HCT116 (cell line): ENCODE measurements at regions of chrX and their contacts with region 1.

Region 1: DNA sequence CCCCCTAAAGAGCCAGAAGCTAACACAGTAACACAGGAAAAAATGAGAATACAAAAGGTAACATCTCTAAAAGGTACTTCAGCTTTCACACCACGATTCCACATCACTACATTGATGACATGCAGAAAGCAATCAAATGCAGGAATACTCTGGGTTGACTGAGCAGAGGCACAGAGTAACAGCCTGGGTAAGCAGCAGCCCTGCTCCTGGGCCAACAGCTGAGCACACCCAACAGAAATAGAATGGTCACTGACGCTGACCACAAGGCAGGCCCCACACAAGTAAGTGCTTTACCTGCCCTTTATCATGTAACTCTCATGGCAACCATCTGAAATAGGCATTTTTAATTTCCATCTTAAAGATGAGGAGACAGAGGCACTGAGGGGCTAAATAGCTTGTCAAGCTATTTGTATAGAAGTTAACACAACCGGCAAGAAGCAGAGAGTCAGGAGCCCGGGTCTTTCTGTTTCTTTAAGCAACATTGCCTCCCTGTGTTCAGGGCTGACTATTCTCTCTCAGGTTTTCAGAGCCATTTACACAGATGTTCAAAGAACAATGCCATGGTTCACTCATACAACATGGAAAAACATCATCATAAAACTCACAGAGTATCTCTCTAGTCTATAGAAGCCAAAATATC is 168.9 kb downstream of the ZNF674 start:
- DNase-seq: peak; percentile 56
- ATAC-seq: peak; percentile 90
- H3K4me3 ChIP-seq: no peak overlapping the region
- H3K27ac ChIP-seq: peak overlapping the region; percentile 89
- H3K4me1 ChIP-seq: peaks cover 19 to 39% of the 10 kb centered on the region in 2 experiments
- H3K27me3 ChIP-seq: no peaks in the 10 kb centered on the region
- CTCF ChIP-seq: peak; percentile 24 to 52 (median 37); a peak in 4 of 6 replicates
- POLR2A ChIP-seq: no peak
- RAD21 ChIP-seq: peak; percentile 83

Region 2: GRCh38 chrX:45801554-45801953 is 574.8 kb before region 1 on chrX:
- CTCF ChIA-PET with region 1: interaction called, 5 read pairs
- POLR2A ChIA-PET with region 1: no interaction called
- RAD21 ChIA-PET with region 1: interaction called in 1 of 2 experiments, 8 read pairs
- intact Hi-C with region 1: loop called (anchors 10 kb)
- DNase-seq: no peak
- ATAC-seq: peak; percentile 38; the same call in 1 of the 2 replicates
- H3K4me3 ChIP-seq: peak overlapping the region in 1 of 2 experiments; percentile 8; a peak in 1 of 4 replicates
- H3K27ac ChIP-seq: peak overlapping the region; percentile 74
- H3K4me1 ChIP-seq: peaks cover 71 to 99% of the 10 kb centered on the region in 2 experiments
- H3K27me3 ChIP-seq: no peaks in the 10 kb centered on the region
- CTCF ChIP-seq: peak in 1 of 3 experiments; percentile 29; a peak in 2 of 6 replicates
- POLR2A ChIP-seq: no peak
- RAD21 ChIP-seq: no peak

Region 3: DNA sequence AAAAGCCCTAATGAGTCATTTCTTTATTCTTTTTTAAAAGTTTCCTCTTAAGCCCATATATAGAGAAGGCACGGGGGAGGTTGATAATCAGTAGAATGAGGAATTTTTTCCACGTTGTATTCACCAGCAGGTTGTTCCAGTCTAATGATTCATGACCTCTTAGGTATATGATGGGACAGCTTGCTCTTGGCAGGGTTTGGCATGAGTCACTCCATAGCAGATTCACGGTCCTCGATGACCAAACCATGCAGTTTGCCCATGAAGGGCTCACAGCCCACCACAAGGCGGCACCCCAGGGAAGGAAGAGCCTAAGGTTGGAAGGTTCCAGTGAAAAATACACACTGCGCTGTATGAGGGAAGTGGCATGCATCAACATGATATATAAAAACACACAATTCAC is 551.9 kb before region 1 on chrX:
- CTCF ChIA-PET with region 1: interaction called, 10 read pairs
- POLR2A ChIA-PET with region 1: no interaction called
- RAD21 ChIA-PET with region 1: no interaction called
- intact Hi-C with region 1: no loop called
- DNase-seq: peak; percentile 89
- ATAC-seq: peak; percentile 84
- H3K4me3 ChIP-seq: no peak overlapping the region
- H3K27ac ChIP-seq: peak overlapping the region; percentile 57; the same call in 1 of the 2 replicates
- H3K4me1 ChIP-seq: peaks cover 40 to 94% of the 10 kb centered on the region in 2 experiments
- H3K27me3 ChIP-seq: no peaks in the 10 kb centered on the region
- CTCF ChIP-seq: peak; percentile 31 to 72 (median 71); a peak in 5 of 6 replicates
- POLR2A ChIP-seq: no peak
- RAD21 ChIP-seq: peak; percentile 75

Region 4: DNA sequence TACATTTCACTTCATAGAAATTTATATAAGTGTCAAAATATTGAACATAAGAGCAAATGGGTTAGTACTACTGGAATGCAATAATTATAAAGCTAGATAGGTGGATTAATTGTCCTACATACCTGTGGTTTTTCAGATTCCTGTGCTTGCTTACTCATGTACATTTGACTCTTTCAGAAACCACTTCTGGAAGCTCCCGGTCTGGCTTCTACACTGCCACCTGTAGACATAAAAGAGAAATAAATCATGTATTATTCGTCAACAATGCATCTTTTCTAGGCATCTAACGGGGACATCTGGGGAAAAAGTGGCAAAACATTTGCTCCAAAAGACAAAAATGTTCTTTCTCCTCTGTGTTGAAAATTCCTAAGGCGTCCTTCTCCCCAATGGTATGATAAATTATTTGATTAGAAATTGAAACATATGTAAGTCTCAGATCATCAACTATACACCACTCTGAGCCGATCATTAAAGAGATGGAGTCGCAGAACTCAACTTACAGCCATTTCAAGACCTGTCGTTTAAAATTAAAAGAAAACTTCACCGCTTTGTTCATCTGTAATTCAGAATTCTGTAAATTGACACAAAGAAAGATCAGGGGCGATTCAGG is 527.0 kb before region 1 on chrX:
- CTCF ChIA-PET with region 1: interaction called, 3 read pairs
- POLR2A ChIA-PET with region 1: no interaction called
- RAD21 ChIA-PET with region 1: no interaction called
- intact Hi-C with region 1: loop called (anchors 5 kb)
- DNase-seq: peak; percentile 57
- ATAC-seq: no peak
- H3K4me3 ChIP-seq: peak overlapping the region; percentile 76 to 81
- H3K27ac ChIP-seq: peak overlapping the region; percentile 87; the same call in 1 of the 2 replicates
- H3K4me1 ChIP-seq: peaks cover 18 to 64% of the 10 kb centered on the region in 2 experiments
- H3K27me3 ChIP-seq: no peaks in the 10 kb centered on the region
- CTCF ChIP-seq: peak in 1 of 3 experiments; percentile 21; a peak in 1 of 6 replicates
- POLR2A ChIP-seq: no peak
- RAD21 ChIP-seq: no peak

Region 5: GRCh38 chrX:46180258-46180687 is 196.1 kb before region 1 on chrX:
- CTCF ChIA-PET with region 1: no interaction called
- POLR2A ChIA-PET with region 1: no interaction called
- RAD21 ChIA-PET with region 1: no interaction called
- intact Hi-C with region 1: loop called (anchors 10 kb)
- DNase-seq: peak; percentile 85
- ATAC-seq: peak; percentile 89
- H3K4me3 ChIP-seq: peak overlapping the region in 1 of 2 experiments; percentile 20; a peak in 2 of 4 replicates
- H3K27ac ChIP-seq: peak overlapping the region; percentile 86
- H3K4me1 ChIP-seq: peaks cover 36 to 56% of the 10 kb centered on the region in 2 experiments
- H3K27me3 ChIP-seq: no peaks in the 10 kb centered on the region
- CTCF ChIP-seq: 0 out of 6 replicates have a peak, but pooled peaks of 1 of the 3 experiments have one; percentile 5
- POLR2A ChIP-seq: no peak
- RAD21 ChIP-seq: no peak; the same call in 1 of the 2 replicates

Region 6: DNA sequence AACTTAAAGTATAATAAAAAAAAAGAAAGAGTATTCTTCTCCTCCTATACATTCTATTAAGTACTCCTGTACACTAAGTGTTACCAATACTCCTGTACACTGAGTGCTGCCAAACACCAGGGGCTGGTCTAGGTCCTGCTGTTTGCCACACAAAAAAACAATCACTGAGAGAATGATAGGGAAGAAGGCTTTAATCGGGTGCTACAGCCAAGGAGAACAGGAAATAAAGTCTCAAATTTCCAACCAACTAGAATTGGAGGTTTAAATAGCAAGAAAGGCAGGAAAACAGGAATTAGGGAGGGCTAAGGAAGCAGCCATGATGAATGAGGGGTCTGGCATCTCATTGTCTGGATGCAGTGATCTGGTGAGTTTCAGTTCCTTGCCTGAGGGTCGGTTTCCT is 70.9 kb before region 1 on chrX:
- CTCF ChIA-PET with region 1: no interaction called
- POLR2A ChIA-PET with region 1: no interaction called
- RAD21 ChIA-PET with region 1: no interaction called
- intact Hi-C with region 1: no loop called
- DNase-seq: no peak
- ATAC-seq: no peak
- H3K4me3 ChIP-seq: no peak overlapping the region
- H3K27ac ChIP-seq: no peak overlapping the region
- H3K4me1 ChIP-seq: no peaks in the 10 kb centered on the region
- H3K27me3 ChIP-seq: no peaks in the 10 kb centered on the region
- CTCF ChIP-seq: no peak
- POLR2A ChIP-seq: no peak
- RAD21 ChIP-seq: no peak